Activated B cell treated with CpG ODN at 0.5 μM for 24 hours (primary cell): ENCODE measurements at regions of chr14 and their contacts with region 1.

Region 1: GRCh38 chr14:89618811-89619551 is 201.9 kb upstream of the FOXN3 start:
- DNase-seq: peak; percentile 69
- ATAC-seq: peak; percentile 73
- H3K4me3 Mint-ChIP-seq: peak overlapping the region; percentile 90
- H3K27ac Mint-ChIP-seq: peak overlapping the region; percentile 86
- H3K4me1 Mint-ChIP-seq: peaks cover 68% of the 10 kb centered on the region
- H3K27me3 Mint-ChIP-seq: no peaks in the 10 kb centered on the region
- CTCF ChIP-seq: no peak

Region 2: DNA sequence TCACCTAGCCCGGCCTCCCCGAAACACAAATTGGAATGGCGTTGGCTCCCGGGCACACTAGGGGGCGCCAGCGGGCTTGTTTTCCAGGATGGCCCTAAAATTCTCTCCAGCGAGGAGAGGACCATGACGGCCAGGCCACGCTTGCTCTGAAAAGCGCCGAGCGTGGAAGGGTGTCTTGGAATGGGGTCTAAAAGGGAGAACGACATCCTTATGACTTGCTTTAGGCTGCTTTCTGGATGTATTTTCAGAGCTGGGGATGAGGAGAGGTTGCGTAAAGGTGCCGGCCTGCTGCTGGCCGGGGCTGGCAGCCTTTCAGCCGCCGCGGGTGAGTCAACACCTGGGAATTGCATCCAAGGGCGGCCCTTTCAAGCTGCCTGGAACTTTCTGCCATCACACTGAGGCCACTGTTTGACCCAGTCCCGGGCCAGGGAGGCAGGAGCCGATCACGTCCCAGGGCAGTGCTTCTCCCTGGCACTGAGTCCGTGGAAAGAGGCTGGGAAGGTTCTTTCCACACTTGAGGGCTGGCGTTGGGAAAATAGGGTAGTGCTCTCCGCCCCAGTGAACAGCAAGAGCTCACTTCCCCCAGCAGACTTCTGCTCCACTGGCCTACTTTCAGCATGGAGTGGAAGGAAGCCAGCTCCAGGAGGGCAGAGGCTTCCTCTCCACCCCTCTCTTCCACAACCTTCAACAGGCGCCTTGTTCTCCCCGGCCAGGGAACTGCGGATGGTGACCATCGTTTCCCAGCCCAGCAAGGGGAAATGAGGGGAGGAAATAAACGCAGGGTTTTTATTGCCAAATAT is 578.3 kb before region 1 on chr14:
- CTCF ChIA-PET with region 1: no interaction called
- POLR2A ChIA-PET with region 1: no interaction called
- intact Hi-C with region 1: loop called (anchors 2 kb)
- DNase-seq: peak; percentile 76
- ATAC-seq: peak; percentile 71
- H3K4me3 Mint-ChIP-seq: peak overlapping the region; percentile 81
- H3K27ac Mint-ChIP-seq: no peak overlapping the region
- H3K4me1 Mint-ChIP-seq: peaks cover 14% of the 10 kb centered on the region
- H3K27me3 Mint-ChIP-seq: peaks cover 34% of the 10 kb centered on the region
- CTCF ChIP-seq: peak; percentile 95

Region 3: GRCh38 chr14:89493877-89494634 is 124.9 kb before region 1 on chr14:
- CTCF ChIA-PET with region 1: interaction called, 4 read pairs
- POLR2A ChIA-PET with region 1: interaction called, 4 read pairs
- intact Hi-C with region 1: loop called (anchors 2 kb)
- DNase-seq: peak; percentile 23
- ATAC-seq: peak; percentile 99
- H3K4me3 Mint-ChIP-seq: peak overlapping the region; percentile 73
- H3K27ac Mint-ChIP-seq: peak overlapping the region; percentile 88
- H3K4me1 Mint-ChIP-seq: peaks cover 26% of the 10 kb centered on the region
- H3K27me3 Mint-ChIP-seq: no peaks in the 10 kb centered on the region
- CTCF ChIP-seq: no peak

Region 4: DNA sequence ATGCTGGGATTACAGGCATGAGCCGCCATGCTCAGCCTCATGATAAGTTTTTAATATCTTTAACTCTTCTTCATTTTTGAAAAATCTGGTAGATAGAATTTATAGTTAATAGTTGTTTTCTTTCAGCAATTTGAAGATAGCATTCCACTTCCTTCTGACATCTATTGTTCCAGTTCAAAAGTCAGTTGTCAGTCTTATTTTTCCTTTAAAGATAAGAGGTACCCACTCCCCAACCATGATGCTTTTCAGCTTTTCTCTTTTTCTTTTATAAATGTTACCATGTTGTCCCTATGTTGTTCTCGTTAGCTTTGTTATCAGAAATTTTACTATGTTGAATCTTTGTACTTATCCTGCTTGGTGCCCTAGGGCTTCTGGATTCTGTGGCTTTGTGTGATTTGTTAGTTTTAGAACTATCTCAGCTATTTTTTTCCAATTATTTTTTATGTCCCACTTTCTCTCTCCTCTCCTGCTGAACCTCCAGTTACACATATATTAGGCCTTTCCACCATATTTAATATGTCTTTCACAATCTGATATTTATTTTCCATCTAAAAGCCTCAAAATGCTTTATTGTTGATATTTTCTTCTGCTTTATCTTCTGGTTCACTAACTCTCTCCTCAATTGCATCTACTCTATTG is 20.3 kb before region 1 on chr14:
- CTCF ChIA-PET with region 1: no interaction called
- POLR2A ChIA-PET with region 1: interaction called, 15 read pairs
- intact Hi-C with region 1: loop called (anchors 2 kb)
- DNase-seq: no peak
- ATAC-seq: no peak
- H3K4me3 Mint-ChIP-seq: no peak overlapping the region
- H3K27ac Mint-ChIP-seq: no peak overlapping the region
- H3K4me1 Mint-ChIP-seq: peaks cover 2% of the 10 kb centered on the region
- H3K27me3 Mint-ChIP-seq: no peaks in the 10 kb centered on the region
- CTCF ChIP-seq: no peak

Region 5: DNA sequence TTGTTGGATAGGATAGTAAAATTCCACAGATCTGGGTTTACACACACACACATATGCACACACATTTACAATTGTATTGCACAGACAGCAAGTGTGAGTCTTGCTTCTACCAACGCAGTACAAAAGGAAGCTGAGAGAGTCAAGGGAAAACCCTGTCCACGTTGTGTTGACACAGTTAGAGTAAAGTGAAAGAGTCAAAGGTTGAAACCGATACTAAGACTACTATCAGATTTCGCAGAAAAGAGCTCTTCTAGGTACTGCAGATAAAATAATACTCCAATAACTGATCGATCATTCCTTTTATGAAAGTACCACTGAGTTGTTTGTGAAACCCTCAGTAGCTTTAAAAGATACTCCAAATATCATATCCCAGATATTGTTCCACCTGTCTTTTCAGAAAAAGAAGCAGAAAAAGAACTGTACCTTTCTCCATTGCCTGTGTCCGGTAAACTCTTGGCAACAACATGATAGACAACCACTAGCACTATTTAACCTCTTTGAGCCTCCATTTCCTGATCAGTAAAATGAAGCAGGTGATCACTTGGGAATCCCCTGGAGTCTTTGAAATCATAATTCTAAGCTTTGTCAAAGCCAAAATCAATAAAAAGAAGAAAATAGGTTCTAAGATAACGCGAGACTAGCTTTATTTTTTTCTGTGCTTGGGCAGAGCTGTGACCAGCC is 22.7 kb after region 1 on chr14:
- CTCF ChIA-PET with region 1: no interaction called
- POLR2A ChIA-PET with region 1: interaction called, 16 read pairs
- intact Hi-C with region 1: loop called (anchors 2 kb)
- DNase-seq: no peak
- ATAC-seq: peak; percentile 84
- H3K4me3 Mint-ChIP-seq: peak overlapping the region; percentile 50
- H3K27ac Mint-ChIP-seq: peak overlapping the region; percentile 73
- H3K4me1 Mint-ChIP-seq: peaks cover 19% of the 10 kb centered on the region
- H3K27me3 Mint-ChIP-seq: no peaks in the 10 kb centered on the region
- CTCF ChIP-seq: no peak

Region 6: DNA sequence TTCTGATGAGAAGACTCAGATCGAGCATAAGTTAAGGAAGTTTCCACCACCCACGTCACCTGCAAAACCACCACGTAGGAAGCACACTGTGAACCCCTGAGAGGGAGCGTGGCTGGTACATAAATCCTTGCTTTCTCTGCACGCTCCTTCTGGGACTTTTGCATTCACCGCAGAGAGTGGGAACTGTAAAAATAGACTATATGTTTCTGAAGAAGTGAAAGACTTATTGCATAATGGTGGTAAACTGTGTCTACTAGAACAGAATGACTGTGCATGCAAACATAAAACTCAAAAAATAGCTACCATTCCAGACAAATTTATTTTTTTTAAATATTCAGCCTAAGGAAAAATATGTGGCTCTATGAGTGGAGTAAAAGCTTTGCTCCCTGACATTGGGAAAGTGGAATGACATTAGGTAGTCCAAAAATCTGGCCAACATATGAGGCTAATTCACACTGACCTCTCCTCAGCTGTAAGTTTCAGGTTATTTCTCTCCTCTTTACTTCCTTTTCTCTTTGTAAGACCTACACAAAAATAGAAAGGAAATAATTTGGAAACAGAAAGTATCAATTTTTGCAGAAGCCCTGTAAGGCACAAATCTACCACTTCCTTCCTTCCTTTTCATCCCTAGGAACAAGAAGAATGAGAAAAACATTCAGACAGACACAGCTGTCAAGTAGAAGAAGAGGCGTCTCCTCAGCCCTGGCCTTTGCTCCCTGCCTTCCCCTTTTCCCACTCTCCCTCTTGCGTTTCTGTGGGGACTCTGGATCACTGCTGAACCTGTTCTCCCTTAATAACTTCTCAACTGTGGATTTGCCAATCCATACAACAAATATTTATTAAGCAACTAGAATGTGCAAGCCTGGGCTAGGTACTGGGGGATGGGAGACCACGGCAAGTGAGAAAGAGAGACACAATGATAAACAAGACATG is 62.4 kb after region 1 on chr14:
- CTCF ChIA-PET with region 1: no interaction called
- POLR2A ChIA-PET with region 1: interaction called, 3 read pairs
- intact Hi-C with region 1: loop called (anchors 5 kb)
- DNase-seq: no peak
- ATAC-seq: peak; percentile 84
- H3K4me3 Mint-ChIP-seq: peak overlapping the region; percentile 67
- H3K27ac Mint-ChIP-seq: peak overlapping the region; percentile 80
- H3K4me1 Mint-ChIP-seq: peaks cover 30% of the 10 kb centered on the region
- H3K27me3 Mint-ChIP-seq: no peaks in the 10 kb centered on the region
- CTCF ChIP-seq: no peak

Region 7: DNA sequence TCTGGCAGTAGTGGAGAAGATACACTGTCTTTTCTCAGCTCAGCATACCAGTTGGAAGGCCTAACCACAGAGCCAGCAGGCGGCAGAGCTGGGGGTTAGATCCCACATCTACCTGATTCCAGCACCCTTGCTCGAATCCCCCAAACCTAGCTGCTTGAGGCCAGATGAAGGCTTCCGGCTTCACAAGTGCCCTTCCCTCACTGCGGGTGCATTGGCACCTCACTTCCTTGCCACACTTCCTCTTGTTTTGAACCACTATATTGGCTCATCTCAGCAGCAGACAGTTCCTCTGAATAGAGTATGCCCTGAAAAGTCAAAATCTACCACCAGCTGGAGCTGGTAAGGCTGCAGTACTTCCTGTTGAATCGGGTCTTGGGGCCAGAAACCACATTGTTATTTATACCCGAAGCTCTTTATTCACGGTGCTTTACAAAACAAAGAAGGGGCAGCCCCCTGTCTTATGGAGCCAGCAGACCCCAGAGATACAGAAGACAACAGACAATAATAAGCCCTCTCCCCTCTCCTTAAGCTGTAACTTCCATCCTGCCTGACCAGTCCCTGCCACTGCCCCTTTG is 101.8 kb after region 1 on chr14:
- CTCF ChIA-PET with region 1: no interaction called
- POLR2A ChIA-PET with region 1: interaction called, 15 read pairs
- intact Hi-C with region 1: loop called (anchors 1 kb)
- DNase-seq: peak; percentile 45
- ATAC-seq: peak; percentile 90
- H3K4me3 Mint-ChIP-seq: peak overlapping the region; percentile 69
- H3K27ac Mint-ChIP-seq: peak overlapping the region; percentile 95
- H3K4me1 Mint-ChIP-seq: peaks cover 66% of the 10 kb centered on the region
- H3K27me3 Mint-ChIP-seq: no peaks in the 10 kb centered on the region
- CTCF ChIP-seq: no peak